ENCODE measurements at regions of chr16 and their contacts with region 1.

Region 1: DNA sequence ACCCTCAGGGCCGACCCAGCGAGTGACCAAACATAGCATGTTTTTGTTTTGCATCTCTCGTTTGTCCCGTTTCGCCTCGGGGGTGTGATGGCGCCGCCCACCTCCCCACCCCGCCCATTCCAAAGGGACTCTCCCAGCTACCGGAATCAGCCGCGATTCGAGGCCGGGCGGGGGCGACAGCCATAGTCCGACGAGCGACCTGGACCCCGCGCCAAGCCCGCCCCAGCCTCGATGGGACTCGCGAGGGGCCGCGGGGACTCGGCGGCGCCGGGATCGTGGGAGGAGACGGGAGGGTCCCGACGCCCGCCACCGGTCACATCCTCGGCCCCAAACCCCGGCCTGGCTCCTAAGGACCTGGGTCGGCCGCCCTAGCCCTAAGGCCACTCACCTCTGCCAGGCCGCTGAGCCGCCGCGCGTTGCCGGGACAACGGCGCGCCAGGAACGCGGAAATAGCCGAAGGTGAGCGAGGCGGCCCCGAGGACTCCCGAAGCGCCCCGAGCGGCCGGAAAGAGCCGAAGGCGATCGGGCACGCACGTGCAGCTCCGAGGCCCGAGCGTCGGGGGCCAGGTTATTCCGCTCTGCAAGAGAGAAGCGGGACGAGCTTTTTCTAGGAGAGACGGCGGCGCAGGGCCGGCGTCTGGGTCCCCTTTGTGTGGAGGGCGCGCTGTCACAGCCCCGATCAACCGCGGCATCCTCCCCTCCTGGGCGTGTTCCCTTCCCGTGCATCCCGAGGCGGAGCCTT is 1.4 kb downstream of the IFT140 start:
- DNase-seq: peak; percentile 55 to 89 (median 66)
- H3K4me3 ChIP-seq: peak overlapping the region; percentile 72 to 99 (median 91)
- H3K27ac ChIP-seq: peak overlapping the region in 57 of 59 donors; percentile 23 to 91 (median 77)
- H3K27me3 ChIP-seq: no peaks in the 10 kb centered on the region
- CTCF ChIP-seq: peak in 14 of 56 donors; percentile 4 to 29 (median 14)

Region 2: GRCh38 chr16:1492923-1493745 is 117.3 kb before region 1 on chr16 and contains the start of gene TELO2:
- intact Hi-C with region 1: loop called in 1 of 2 experiments (anchors 5 kb)
- DNase-seq: peak; percentile 61 to 87 (median 74)
- H3K4me3 ChIP-seq: peak within 1 kb of the TSS; percentile 58 to 95 (median 81)
- H3K27ac ChIP-seq: peak within 1 kb of the TSS in 57 of 59 donors; percentile 1 to 96 (median 86)
- H3K27me3 ChIP-seq: no peaks in the 10 kb centered on the region
- CTCF ChIP-seq: peak in 10 of 56 donors; percentile 4 to 38 (median 21)
- total RNA-seq, gene TELO2: 21.6 to 46.8 (median 31.5) TPM

Region 3: DNA sequence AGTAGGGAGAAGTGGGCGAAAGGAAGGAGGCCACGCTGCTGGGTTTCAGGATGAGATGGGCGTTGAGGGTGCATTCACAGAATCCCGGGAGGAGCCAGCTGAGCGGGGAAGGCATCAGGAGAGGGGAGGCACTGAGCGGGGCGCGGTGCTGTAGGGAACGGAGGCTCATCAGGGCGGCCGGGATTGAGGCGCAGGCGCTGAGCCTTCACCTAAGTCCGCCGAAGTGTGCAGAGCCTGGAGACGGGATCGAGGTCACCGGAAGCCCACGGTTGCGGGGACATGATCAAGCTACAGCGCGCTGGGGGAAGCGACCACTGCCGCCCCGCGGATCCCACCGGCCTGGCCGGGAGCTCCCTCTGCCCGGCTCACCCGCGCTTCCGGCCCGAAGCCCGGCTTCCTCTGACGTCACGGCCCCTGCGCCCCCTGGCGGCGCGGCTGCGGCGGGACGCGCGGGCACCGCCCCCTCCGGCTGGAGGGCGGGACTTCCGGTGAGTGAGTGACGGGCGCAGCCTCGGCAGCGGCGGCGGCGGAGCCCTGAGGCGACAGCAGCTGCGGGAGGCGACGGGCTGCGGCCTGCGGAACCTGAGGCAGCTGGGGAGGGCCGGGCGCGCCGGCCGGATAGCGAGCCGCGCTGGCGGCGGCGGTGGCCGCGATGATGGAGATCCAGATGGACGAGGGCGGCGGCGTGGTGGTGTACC is 95.4 kb after region 1 on chr16 and contains the start of gene MAPK8IP3:
- intact Hi-C with region 1: loop called (anchors 1 to 5 kb)
- DNase-seq: peak; percentile 77 to 96 (median 87)
- H3K4me3 ChIP-seq: peak within 1 kb of the TSS; percentile 71 to 99 (median 94)
- H3K27ac ChIP-seq: peak within 1 kb of the TSS; percentile 29 to 99 (median 92)
- H3K27me3 ChIP-seq: no peaks in the 10 kb centered on the region
- CTCF ChIP-seq: peak; percentile 64 to 99 (median 94)
- total RNA-seq, gene MAPK8IP3: 246 to 429 (median 311) TPM

Region 4: GRCh38 chr16:1809281-1809801 is 198.9 kb after region 1 on chr16:
- intact Hi-C with region 1: no loop called
- DNase-seq: no peak
- H3K4me3 ChIP-seq: no peak overlapping the region
- H3K27ac ChIP-seq: peak overlapping the region in 12 of 59 donors; percentile 18 to 80 (median 52)
- H3K27me3 ChIP-seq: no peaks in the 10 kb centered on the region
- CTCF ChIP-seq: no peak

Region 5: DNA sequence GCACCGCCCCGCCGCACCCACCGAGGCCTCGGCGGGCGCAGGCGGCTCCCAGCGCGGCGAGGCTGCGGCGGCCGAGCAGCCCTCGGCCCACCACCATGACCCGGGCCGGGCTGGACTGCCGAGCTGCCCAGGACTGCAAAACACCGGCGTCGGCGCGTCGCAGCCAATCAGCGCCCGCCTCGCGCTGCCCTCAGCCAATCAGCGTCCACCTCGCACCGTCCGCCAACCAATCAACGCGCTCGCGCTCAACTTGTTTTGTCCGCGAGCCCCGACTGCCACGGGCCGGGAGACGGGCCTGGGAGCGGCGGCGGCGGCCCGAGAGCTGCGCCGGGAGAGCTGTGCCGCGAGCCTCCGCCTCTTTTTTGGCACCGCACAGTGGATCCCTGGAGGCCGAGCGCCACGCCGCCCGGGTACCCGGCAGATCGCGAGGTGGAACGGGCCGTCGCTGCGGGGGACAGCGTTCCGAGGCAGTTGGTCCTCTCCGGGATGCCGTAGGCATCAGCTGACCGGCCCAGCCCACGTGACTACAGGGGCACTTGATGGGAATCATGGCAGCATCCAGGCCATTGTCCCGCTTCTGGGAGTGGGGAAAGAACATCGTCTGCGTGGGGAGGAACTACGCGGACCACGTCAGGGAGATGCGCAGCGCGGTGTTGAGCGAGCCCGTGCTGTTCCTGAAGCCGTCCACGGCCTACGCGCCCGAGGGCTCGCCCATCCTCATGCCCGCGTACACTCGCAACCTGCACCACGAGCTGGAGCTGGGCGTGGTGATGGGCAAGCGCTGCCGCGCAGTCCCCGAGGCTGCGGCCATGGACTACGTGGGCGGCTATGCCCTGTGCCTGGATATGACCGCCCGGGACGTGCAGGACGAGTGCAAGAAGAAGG is 216.5 kb after region 1 on chr16 and contains the starts of genes FAHD1 and HAGH:
- intact Hi-C with region 1: loop called (anchors 5 kb)
- DNase-seq: peak; percentile 91 to 96 (median 92)
- H3K4me3 ChIP-seq: peak within 1 kb of the TSS; percentile 51 to 100 (median 97)
- H3K27ac ChIP-seq: peak within 1 kb of the TSS in 58 of 59 donors; percentile 67 to 97 (median 90)
- H3K27me3 ChIP-seq: no peaks in the 10 kb centered on the region
- CTCF ChIP-seq: peak in 26 of 56 donors; percentile 7 to 49 (median 29)
- total RNA-seq, gene FAHD1: 13.0 to 36.9 (median 23.5) TPM
- total RNA-seq, gene HAGH: 85.9 to 195 (median 142) TPM